ENCODE measurements at regions of chr5 and their contacts with region 1.

Region 1: GRCh38 chr5:10559871-10560270 is 4.0 kb upstream of the ANKRD33B start:
- DNase-seq: no peak
- CTCF ChIP-seq: no peak

Region 2: DNA sequence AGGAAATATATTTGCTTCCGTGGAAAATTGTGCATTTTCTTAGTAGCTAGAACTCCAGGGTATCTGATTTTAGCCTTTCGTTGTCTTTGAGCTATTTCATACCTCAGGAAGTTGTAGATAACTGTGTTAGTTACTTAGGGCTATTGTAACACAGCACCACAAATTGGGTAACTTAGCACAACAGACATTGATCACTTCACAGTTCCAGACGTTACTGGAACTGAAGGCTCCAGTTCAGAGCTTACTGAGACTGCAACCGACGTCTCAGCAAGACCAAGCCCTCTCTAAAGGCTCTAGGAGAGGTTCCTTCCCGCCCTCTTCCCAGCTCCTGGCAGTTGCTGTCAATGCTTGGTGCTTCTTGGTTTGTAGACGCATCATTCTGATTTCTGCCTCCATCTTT is 13.7 kb before region 1 on chr5:
- CTCF ChIA-PET with region 1: interaction called, 13 read pairs
- POLR2A ChIA-PET with region 1: no interaction called
- DNase-seq: no peak
- CTCF ChIP-seq: no peak